Psoas muscle (tissue), 8 donors: ENCODE measurements at regions of chr1 and their contacts with region 1.

Region 1: GRCh38 chr1:106785176-106785575 is 271.3 kb upstream of the PRMT6 start:
- DNase-seq: no peak
- ATAC-seq: no peak
- H3K4me3 ChIP-seq: no peak overlapping the region
- H3K27ac ChIP-seq: no peak overlapping the region
- H3K4me1 ChIP-seq: no peaks in the 10 kb centered on the region
- H3K27me3 ChIP-seq: no peaks in the 10 kb centered on the region
- CTCF ChIP-seq: no peak

Region 2: DNA sequence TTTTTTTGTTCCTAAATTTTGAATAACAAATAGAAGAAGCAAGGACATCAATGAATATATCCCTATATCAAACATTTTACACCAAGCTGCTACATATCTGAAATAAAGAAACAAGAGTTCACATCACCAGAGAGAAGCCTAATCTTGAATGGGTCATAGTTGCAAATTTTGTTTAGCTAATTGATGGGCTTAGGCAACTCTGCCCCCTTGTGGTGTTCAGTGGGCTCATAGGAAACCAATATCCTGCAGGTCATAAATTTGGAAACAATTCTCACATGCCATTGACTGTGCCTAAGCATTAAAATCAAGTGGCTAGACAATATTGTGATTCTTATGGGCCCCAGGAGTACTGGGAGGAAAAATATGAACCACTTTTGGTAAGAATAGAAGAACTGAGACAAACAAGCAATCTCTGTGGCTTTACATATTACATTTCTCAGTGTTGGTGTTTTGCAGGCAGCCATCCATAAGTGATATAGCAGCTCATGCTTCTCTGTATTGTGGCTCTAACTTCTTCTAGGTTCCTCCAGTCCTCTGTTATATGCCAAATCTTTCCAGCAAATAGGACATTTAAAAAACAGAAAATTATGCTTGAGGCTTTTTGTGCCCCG is 991.5 kb before region 1 on chr1:
- intact Hi-C with region 1: no loop called
- DNase-seq: no peak
- ATAC-seq: no peak
- H3K4me3 ChIP-seq: no peak overlapping the region
- H3K27ac ChIP-seq: no peak overlapping the region
- H3K4me1 ChIP-seq: no peaks in the 10 kb centered on the region
- H3K27me3 ChIP-seq: no peaks in the 10 kb centered on the region
- CTCF ChIP-seq: no peak

Region 3: DNA sequence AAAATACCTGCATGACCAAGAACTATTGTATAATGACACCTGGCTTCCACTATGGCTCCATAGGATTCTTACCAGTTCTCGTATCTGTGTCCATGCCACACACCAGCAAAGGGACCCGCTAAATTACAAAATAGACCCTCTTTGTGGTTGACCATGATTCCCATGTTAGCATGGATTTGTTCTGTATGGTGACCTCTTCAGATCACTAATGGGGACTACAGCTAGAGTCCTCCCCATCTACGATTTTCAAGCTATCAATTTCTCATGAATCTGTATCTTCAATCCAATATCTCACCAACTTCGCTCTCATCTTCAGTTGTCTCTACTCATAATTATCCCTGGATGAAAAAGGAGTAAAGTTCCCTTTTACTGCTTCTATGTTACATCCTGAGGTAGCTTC is 65.7 kb after region 1 on chr1:
- intact Hi-C with region 1: loop called in 1 of 2 experiments (anchors 10 kb)
- DNase-seq: no peak
- ATAC-seq: no peak
- H3K4me3 ChIP-seq: no peak overlapping the region
- H3K27ac ChIP-seq: no peak overlapping the region
- H3K4me1 ChIP-seq: no peaks in the 10 kb centered on the region
- H3K27me3 ChIP-seq: no peaks in the 10 kb centered on the region
- CTCF ChIP-seq: no peak